Activated naive CD4-positive, alpha-beta T cell treated with anti-CD3 and anti-CD28 coated beads for 36 hours (primary cell): ENCODE measurements at regions of chr22 and their contacts with region 1.

Region 1: GRCh38 chr22:20079745-20080444 is at the start of gene DGCR8:
- DNase-seq: peak; percentile 68
- H3K4me3 Mint-ChIP-seq: peak within 1 kb of the TSS; percentile 90
- H3K27ac Mint-ChIP-seq: peak within 1 kb of the TSS; percentile 87
- H3K4me1 Mint-ChIP-seq: peaks cover 41% of the 10 kb centered on the region
- H3K27me3 Mint-ChIP-seq: no peaks in the 10 kb centered on the region
- total RNA-seq, gene DGCR8: 29.8 to 36.5 TPM

Region 2: DNA sequence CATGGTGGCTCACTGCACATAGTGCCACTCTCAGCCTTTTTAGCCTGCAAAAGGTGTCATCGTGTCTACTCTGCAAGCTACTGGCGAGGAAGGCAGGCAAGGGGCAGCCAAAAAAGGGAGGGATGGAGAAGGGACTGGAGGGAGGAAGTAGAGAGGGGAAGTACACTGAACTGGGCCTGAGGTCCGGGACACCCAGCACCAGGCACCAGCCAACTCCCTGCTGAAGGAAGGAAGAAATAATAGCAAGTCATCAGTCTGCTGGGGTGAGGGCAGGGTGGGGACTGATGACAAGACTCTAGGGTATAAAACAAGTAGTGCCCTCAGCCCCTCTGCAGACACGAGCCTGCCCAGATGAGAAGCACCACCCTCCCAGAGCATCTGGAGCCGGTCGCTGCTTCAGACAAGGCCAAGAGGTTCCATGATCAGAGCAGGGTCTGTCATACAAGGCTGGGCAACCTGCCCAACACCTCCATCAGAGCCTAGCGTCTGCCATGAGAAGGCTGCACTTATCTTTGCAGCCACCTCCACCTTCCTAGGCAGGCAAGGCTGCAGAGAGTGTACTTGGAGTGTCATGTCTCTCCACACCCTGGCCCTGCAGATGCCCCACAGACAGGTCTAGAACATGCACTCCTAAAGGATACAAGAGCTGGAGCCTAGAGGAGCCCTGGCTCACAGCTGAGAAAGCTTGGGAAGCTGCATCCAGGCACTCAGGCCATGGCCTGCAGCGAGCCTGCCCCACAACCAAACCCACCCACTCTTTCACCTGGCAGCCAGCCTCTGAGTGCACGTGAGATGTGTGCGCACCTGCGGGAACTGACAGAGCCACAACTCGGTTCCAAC is 147.3 kb before region 1 on chr22:
- CTCF ChIA-PET with region 1: no interaction called
- intact Hi-C with region 1: no loop called
- DNase-seq: no peak
- H3K4me3 Mint-ChIP-seq: no peak overlapping the region
- H3K27ac Mint-ChIP-seq: peak overlapping the region; percentile 35
- H3K4me1 Mint-ChIP-seq: no peaks in the 10 kb centered on the region
- H3K27me3 Mint-ChIP-seq: no peaks in the 10 kb centered on the region

Region 3: GRCh38 chr22:19986410-19987341 is 93.2 kb before region 1 on chr22:
- CTCF ChIA-PET with region 1: no interaction called
- intact Hi-C with region 1: no loop called
- DNase-seq: peak; percentile 64
- H3K4me3 Mint-ChIP-seq: peak overlapping the region; percentile 39
- H3K27ac Mint-ChIP-seq: no peak overlapping the region
- H3K4me1 Mint-ChIP-seq: no peaks in the 10 kb centered on the region
- H3K27me3 Mint-ChIP-seq: no peaks in the 10 kb centered on the region

Region 4: GRCh38 chr22:20016734-20017621 is 62.9 kb before region 1 on chr22 and contains the start of gene ARVCF:
- CTCF ChIA-PET with region 1: no interaction called
- intact Hi-C with region 1: loop called (anchors 1 kb)
- DNase-seq: peak; percentile 90
- H3K4me3 Mint-ChIP-seq: peak within 1 kb of the TSS; percentile 84
- H3K27ac Mint-ChIP-seq: no peak within 1 kb of the TSS
- H3K4me1 Mint-ChIP-seq: peaks cover 17% of the 10 kb centered on the region
- H3K27me3 Mint-ChIP-seq: peaks cover 11% of the 10 kb centered on the region
- total RNA-seq, gene ARVCF: 2.0 to 2.6 TPM

Region 5: GRCh38 chr22:20037419-20037818 is 42.5 kb before region 1 on chr22:
- CTCF ChIA-PET with region 1: no interaction called
- intact Hi-C with region 1: loop called (anchors 5 kb)
- DNase-seq: peak; percentile 63
- H3K4me3 Mint-ChIP-seq: no peak overlapping the region
- H3K27ac Mint-ChIP-seq: peak overlapping the region; percentile 84
- H3K4me1 Mint-ChIP-seq: peaks cover 25% of the 10 kb centered on the region
- H3K27me3 Mint-ChIP-seq: no peaks in the 10 kb centered on the region

Region 6: DNA sequence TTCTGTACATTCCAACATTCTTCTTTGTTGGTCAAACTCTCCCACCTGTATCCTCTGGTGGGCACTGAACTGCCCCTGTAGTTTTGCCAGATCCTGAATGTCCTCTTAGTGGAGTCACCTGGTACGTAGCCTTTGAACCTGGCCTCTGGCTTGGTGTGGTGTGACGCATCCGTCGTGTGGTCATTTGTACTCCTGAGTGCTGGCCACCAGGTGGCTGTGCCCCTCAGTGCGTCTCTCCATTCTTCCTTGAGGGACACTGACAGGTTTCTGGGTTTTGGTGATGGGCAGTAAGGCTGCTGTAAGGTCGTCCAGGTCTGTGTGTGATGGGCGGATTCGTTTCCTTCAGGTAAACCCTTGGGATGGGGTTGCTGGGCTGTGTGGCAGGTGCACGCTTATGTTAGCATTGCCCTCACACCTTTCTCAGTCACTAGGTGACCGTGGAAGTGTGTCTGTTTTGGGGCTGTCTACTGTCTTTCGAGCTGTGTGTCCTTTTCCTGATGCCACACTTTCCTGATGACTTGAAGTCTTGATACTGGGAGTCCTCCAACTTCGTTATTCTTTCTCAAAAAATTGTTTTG is 22.4 kb after region 1 on chr22:
- CTCF ChIA-PET with region 1: interaction called, 4 read pairs
- intact Hi-C with region 1: loop called (anchors 1 kb)
- DNase-seq: no peak
- H3K4me3 Mint-ChIP-seq: no peak overlapping the region
- H3K27ac Mint-ChIP-seq: peak overlapping the region; percentile 4
- H3K4me1 Mint-ChIP-seq: peaks cover 46% of the 10 kb centered on the region
- H3K27me3 Mint-ChIP-seq: no peaks in the 10 kb centered on the region

Region 7: GRCh38 chr22:20159076-20159475 is 79.2 kb after region 1 on chr22:
- CTCF ChIA-PET with region 1: no interaction called
- intact Hi-C with region 1: no loop called
- DNase-seq: no peak
- H3K4me3 Mint-ChIP-seq: no peak overlapping the region
- H3K27ac Mint-ChIP-seq: no peak overlapping the region
- H3K4me1 Mint-ChIP-seq: no peaks in the 10 kb centered on the region
- H3K27me3 Mint-ChIP-seq: peaks cover 3% of the 10 kb centered on the region